ENCODE measurements at regions of chr4 and their contacts with region 1.

Region 1: DNA sequence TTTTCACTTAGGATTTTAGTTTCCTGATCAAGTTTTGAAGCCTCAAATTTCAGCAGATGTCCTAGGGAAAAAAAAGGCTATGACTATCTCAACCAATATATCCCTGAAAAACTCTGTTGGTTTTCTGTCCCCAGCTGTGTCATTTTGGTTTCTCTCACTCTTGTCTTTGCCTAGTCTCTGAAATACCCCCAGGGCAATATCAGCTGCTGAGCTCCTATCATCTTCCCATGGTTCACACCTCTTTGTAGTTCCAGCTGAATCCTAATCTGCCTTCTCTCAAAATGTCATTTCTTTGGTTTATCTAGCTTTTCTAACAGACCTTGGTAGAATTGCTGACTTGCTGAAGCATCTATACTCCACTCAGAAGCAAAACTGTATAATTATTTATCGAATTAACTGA is 2370.5 kb downstream of the ARAP2 start:
- DNase-seq: no peak
- H3K4me3 ChIP-seq: no peak overlapping the region
- H3K27ac ChIP-seq: no peak overlapping the region
- H3K4me1 ChIP-seq: no peaks in the 10 kb centered on the region
- H3K27me3 ChIP-seq: no peaks in the 10 kb centered on the region
- CTCF ChIP-seq: no peak
- POLR2A ChIP-seq: no peak

Region 2: GRCh38 chr4:33283818-33284217 is 590.0 kb before region 1 on chr4:
- CTCF ChIA-PET with region 1: no interaction called
- POLR2A ChIA-PET with region 1: no interaction called
- dilution Hi-C with region 1: no loop called
- intact Hi-C with region 1: no loop called
- DNase-seq: no peak
- H3K4me3 ChIP-seq: no peak overlapping the region
- H3K27ac ChIP-seq: no peak overlapping the region
- H3K4me1 ChIP-seq: no peaks in the 10 kb centered on the region
- H3K27me3 ChIP-seq: no peaks in the 10 kb centered on the region
- CTCF ChIP-seq: no peak
- POLR2A ChIP-seq: no peak

Region 3: DNA sequence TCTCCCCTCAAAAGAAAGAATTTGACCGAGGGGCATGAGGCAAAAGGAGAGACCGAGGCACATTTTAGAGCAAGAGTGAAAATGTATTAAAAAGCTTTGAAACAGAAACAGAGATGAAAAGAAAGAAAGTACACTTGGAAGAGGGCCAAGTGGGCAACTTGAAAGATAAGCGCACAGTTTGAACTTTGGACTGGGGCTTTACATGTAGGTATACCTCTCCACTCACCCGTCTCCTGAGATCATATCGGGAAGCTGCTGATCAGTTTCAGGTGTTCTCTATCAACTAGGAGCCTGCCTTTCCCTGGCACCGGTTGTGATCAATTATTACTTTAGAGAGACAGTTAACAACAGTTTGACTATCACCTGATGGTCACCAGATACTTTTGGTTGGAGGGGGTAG is 296.0 kb before region 1 on chr4:
- CTCF ChIA-PET with region 1: no interaction called
- POLR2A ChIA-PET with region 1: no interaction called
- dilution Hi-C with region 1: no loop called
- intact Hi-C with region 1: no loop called
- DNase-seq: no peak
- H3K4me3 ChIP-seq: no peak overlapping the region
- H3K27ac ChIP-seq: no peak overlapping the region
- H3K4me1 ChIP-seq: no peaks in the 10 kb centered on the region
- H3K27me3 ChIP-seq: no peaks in the 10 kb centered on the region
- CTCF ChIP-seq: no peak
- POLR2A ChIP-seq: no peak

Region 4: GRCh38 chr4:33825685-33826084 is 48.1 kb before region 1 on chr4:
- CTCF ChIA-PET with region 1: no interaction called
- POLR2A ChIA-PET with region 1: no interaction called
- dilution Hi-C with region 1: no loop called
- intact Hi-C with region 1: loop called (anchors 2 kb)
- DNase-seq: no peak
- H3K4me3 ChIP-seq: no peak overlapping the region
- H3K27ac ChIP-seq: no peak overlapping the region
- H3K4me1 ChIP-seq: no peaks in the 10 kb centered on the region
- H3K27me3 ChIP-seq: no peaks in the 10 kb centered on the region
- CTCF ChIP-seq: no peak
- POLR2A ChIP-seq: no peak